Head of caudate nucleus (tissue), 42 donors: ENCODE measurements at regions of chr2 and their contacts with region 1.

Region 1: GRCh38 chr2:147082850-147083522 is 761.8 kb upstream of the ACVR2A start:
- DNase-seq: peak in 35 of 42 donors; percentile 3 to 89 (median 55)

Region 2: DNA sequence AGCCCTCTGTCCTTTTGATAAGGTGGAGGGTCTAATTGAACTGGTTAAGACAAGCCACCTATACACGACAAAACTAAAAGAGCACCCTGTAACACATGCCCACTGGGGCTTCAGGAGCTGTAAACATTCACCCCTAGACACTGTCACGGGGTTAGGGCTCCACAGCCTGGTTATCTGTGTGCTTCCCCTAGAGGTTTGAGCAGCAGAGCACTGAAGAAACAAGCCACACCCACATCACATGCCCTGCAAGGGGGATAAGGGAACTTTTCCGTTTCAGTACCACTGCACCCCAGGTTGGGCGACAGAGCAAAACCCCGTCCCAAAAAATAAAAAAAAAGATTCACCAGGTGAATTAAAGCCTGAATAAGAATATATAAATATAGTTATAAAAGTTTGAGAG is 151.9 kb before region 1 on chr2:
- intact Hi-C with region 1: no loop called
- DNase-seq: no peak

Region 3: DNA sequence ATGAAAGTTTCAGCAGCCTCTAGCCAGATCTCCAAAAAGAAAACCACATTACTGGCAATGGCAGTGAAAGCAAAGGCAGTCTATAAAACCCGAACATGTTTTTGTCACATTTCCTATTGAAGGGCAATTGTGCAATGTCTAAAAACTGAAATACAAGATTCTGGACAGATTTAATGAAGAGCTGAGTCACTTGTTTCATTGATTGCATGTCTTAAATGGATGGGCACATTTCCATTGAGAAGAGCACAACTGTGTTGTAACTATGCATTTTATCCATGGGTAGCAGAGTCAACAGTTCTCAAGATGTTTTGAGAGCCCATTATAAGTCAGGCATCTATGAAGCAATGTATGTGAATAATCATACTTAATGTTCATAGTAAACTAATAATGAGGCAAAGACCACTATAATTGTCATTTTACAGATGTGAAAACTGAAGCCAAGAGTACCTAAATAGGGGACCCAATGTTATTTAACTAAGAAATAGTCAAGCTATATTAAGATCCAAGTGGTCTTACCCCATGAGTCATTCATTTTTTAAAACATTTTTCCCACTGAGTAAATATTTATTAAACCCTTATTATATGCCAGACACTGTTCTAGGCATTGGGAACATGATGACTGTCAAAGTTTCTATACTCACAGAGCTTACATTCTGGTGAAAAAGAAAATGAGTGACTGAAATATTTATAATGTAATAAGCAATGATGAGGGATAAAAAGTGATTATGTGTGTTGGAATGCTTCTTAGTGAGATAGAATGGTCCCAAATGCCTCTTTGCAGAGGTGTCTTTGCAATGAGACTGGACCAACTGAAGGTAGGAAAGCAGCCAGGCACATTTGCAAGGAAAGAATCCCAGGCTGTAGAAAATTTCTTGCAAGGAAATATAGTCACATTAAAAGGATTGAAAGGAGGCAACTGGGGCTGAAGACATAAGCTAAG is 57.1 kb before region 1 on chr2:
- intact Hi-C with region 1: no loop called
- DNase-seq: no peak

Region 4: GRCh38 chr2:147331790-147332419 is 248.9 kb after region 1 on chr2:
- intact Hi-C with region 1: loop called (anchors 10 kb)
- DNase-seq: peak in 8 of 42 donors; percentile 7 to 21 (median 12)

Region 5: DNA sequence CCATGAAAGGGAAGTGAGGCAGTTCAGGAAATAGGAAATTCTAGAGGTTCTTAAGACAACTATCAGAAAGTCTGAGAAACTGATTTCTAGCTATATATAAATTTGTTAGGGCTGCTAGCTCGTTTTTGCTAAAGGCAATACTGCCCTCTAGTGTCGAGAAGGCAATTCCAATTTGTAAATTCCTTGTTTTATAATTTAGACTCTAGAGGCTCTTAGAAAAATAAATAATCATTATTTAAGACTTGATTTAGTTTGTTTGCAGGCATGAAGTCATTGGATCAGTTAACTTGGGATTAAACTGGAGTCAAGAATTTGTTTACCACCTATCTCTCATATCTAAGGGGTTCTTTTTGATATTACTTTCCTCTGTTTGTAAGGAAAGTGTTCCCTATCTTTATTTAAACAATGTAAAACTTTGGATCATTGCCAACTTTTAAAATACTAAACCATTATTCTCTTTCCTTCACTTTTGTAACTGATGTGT is 828.0 kb after region 1 on chr2:
- intact Hi-C with region 1: loop called (anchors 10 kb)
- DNase-seq: peak in 21 of 42 donors; percentile 6 to 77 (median 35)